Vagina (tissue), 2 donors: ENCODE measurements at regions of chr2 and their contacts with region 1.

Region 1: GRCh38 chr2:201118121-201118960 is 2.4 kb downstream of the CFLAR start:
- DNase-seq: no peak
- H3K4me3 ChIP-seq: peak overlapping the region; percentile 69 to 88
- H3K27ac ChIP-seq: peak overlapping the region; percentile 97
- H3K4me1 ChIP-seq: peaks cover 50% of the 10 kb centered on the region
- H3K27me3 ChIP-seq: no peaks in the 10 kb centered on the region
- CTCF ChIP-seq: peak in 2 of 3 experiments; percentile 18 to 37
- POLR2A ChIP-seq: peak in 1 of 2 donors; percentile 35

Region 2: GRCh38 chr2:200716386-200716785 is 402.0 kb before region 1 on chr2:
- intact Hi-C with region 1: no loop called
- DNase-seq: no peak
- H3K4me3 ChIP-seq: no peak overlapping the region
- H3K27ac ChIP-seq: no peak overlapping the region
- H3K4me1 ChIP-seq: peaks cover 4% of the 10 kb centered on the region
- H3K27me3 ChIP-seq: no peaks in the 10 kb centered on the region
- CTCF ChIP-seq: no peak
- POLR2A ChIP-seq: no peak

Region 3: GRCh38 chr2:201151127-201151981 is 33.0 kb after region 1 on chr2:
- intact Hi-C with region 1: loop called (anchors 5 kb)
- DNase-seq: no peak
- H3K4me3 ChIP-seq: no peak overlapping the region
- H3K27ac ChIP-seq: peak overlapping the region; percentile 74
- H3K4me1 ChIP-seq: peaks cover 25% of the 10 kb centered on the region
- H3K27me3 ChIP-seq: no peaks in the 10 kb centered on the region
- CTCF ChIP-seq: no peak
- POLR2A ChIP-seq: no peak